ENCODE measurements at regions of chr5 and their contacts with region 1.

Region 1: DNA sequence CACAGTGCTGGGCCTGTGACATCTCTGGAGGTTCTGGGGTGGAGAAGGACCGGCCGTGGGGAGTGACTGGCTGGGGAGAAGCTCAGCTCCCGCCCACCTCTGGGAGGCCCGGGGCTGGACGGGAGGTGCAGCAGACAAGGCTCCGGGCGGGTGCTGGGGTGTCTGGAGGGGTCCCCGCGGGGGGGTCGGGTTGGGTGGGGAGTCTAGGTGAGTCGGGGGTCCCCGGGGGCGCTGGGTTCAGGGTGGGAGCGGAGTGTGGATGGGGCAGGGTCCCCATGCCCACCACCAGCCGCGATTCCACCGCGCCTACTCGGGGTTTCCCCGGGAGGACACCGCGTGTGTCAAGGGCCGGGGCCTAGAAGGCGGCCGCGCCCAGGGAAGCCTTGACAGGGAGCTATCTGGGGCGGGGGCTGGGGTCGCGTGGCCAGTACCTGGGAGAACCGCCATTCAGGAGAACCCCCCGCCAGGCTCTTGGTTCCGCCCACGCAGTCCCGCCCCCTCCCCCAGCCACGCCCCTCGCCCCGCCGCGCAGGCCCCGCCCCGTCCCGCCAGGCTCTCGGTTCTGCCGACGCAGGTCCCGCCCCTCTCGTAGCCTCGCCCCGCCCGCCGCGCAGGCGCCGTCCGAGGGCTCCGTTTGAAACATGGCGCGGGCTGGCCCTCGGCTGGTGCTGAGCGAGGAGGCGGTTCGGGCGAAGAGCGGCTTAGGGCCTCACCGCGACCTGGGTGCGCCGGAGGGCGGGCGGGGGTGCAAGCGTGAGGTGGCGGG is at the start of gene CEP72:
- DNase-seq: peak; percentile 92
- ATAC-seq: peak; percentile 98 to 99
- total RNA-seq, gene CEP72: 1.4 to 2.5 TPM

Region 2: DNA sequence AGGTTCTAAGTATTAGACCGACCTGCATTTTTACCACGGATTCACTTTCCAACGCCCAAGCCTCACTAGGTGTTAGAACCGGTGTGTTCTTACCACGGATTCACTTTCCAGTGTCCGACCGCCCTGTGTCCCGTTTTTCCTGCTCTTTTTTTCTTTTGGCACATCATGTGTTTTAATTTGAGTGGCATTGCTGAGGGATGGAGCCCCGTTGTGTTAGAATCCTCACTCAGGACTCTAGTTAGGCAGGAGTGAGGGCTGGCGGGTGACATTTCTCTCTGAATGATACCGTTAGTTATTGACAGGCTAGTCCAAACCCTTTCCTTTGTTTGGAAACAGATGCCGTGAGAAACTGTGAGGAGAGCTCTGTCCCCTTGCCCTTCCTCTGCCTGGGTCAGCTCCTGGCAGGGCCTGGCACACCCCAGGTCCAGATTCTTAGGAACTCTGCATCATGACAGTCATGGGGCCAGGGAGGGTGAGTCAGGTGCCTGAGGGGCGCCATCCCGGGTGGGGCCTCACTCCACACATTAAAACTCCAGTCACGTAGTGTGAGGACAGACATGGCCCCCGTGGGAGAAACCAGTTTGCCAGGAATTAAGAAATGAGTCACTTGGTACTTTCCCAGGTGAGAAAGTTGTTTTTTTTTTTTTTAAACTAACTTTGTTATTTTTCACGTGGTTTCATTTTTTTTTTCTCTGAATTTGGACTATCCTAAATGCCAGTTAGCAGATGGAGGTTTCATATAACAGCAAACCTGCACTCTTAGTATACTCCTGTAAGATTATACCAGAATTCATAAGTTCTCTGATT is 153.2 kb before region 1 on chr5:
- intact Hi-C with region 1: loop called in 1 of 2 experiments (anchors 10 kb)
- DNase-seq: peak; percentile 22
- ATAC-seq: peak in 1 of 2 donors; percentile 68

Region 3: DNA sequence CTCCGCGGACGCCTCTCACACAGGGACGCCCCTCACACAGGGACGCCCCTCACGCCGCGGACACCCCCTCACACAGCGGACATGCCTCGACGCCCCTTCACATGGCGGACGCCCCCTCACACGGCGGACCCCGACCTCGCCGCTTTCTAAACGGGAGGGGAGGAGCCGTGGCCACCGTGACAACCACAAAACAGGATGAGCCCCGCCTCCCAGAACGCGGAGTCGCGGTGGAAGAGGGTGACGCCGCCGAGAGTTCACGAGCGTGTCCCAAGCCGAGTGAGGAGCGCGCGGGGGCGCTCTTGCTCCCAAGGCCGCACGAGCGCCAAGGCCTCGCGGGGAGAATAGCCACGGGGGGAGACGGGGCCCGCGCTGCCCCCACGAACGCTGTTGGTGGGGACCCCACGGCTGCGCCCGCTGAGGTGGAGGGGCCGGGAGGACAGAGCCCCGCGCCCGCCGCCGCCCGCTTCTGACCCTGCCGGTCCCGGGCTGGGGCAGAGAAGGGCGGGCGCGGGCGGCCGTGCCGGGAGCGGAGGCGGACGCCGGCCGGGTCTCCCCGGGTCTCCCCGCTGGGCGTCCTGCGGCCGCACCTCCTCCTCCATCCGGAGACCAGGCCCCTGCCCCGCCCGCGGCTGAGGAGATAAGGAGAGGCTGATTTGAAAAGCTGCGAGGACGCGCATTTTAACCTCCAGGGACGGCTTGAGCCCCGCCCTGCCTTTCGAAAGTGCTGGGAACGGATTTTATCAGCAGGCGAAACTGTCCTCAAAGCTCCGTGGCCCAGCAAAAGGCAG is 392.8 kb after region 1 on chr5:
- intact Hi-C with region 1: no loop called
- DNase-seq: peak; percentile 90
- ATAC-seq: peak; percentile 80 to 84

Measured in left cardiac atrium (tissue), 4 donors.